CD8-positive, alpha-beta T cell (primary cell): ENCODE measurements at regions of chr6 and their contacts with region 1.

Region 1: GRCh38 chr6:2876210-2877056 is 26.7 kb downstream of the SERPINB9 start:
- DNase-seq: peak in 3 of 9 experiments; percentile 38 to 67 (median 57)
- ATAC-seq: peak; percentile 9
- H3K4me3 ChIP-seq: peak overlapping the region; percentile 33 to 65
- H3K4me3 Mint-ChIP-seq: peak overlapping the region; percentile 87
- H3K27ac ChIP-seq: peak overlapping the region; percentile 24 to 77
- H3K27ac Mint-ChIP-seq: peak overlapping the region; percentile 93
- H3K4me1 ChIP-seq: peaks cover 68% of the 10 kb centered on the region
- H3K4me1 Mint-ChIP-seq: peaks cover 78% of the 10 kb centered on the region
- H3K27me3 ChIP-seq: no peaks in the 10 kb centered on the region
- H3K27me3 Mint-ChIP-seq: no peaks in the 10 kb centered on the region
- CTCF ChIP-seq: no peak

Region 2: DNA sequence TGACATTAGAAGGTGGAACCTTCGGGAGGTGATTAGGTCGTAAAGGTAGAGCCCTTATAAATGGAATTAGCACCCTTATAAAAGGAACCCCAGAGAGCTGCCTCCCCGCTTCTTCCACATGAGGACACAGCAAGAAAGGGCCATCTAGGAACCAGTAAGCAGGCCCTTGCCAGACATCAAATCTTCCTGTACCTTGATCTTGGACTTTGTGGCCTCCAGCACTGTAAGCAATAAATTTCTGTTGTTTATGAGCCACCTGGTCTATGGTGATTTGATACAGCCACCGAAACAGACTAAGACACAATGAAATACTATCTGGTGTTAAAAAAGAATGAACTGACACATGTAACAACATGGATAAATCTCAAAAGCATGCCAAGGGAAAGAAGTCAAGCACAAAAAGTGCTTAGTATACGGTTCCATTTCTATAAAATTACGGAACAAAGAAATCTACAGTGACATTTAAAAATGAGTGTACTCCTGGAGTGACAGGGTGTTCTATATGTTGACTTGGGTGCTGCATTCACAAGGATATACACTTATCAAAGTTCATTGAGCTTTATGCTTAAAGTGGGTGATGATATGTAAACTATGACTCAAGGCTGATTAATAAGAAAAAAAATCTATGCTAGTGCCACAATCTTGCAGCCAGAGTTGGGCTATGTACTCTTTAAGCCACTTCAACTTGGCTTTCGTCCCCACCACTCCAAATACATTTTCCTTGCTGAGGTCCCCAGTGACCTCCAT is 53.2 kb before region 1 on chr6:
- CTCF ChIA-PET with region 1: no interaction called
- POLR2A ChIA-PET with region 1: no interaction called
- intact Hi-C with region 1: no loop called
- DNase-seq: no peak
- ATAC-seq: no peak
- H3K4me3 ChIP-seq: no peak overlapping the region
- H3K4me3 Mint-ChIP-seq: no peak overlapping the region
- H3K27ac ChIP-seq: no peak overlapping the region
- H3K27ac Mint-ChIP-seq: no peak overlapping the region
- H3K4me1 ChIP-seq: no peaks in the 10 kb centered on the region
- H3K4me1 Mint-ChIP-seq: peaks cover 12% of the 10 kb centered on the region
- H3K27me3 ChIP-seq: no peaks in the 10 kb centered on the region
- H3K27me3 Mint-ChIP-seq: no peaks in the 10 kb centered on the region
- CTCF ChIP-seq: no peak

Region 3: GRCh38 chr6:2862712-2863181 is 13.7 kb before region 1 on chr6:
- CTCF ChIA-PET with region 1: interaction called, 7 read pairs
- POLR2A ChIA-PET with region 1: interaction called, 19 read pairs
- intact Hi-C with region 1: loop called (anchors 2 kb)
- DNase-seq: peak in 3 of 9 experiments; percentile 28 to 35 (median 32)
- ATAC-seq: no peak
- H3K4me3 ChIP-seq: no peak overlapping the region
- H3K4me3 Mint-ChIP-seq: no peak overlapping the region
- H3K27ac ChIP-seq: peak overlapping the region in 1 of 2 experiments; percentile 80
- H3K27ac Mint-ChIP-seq: peak overlapping the region; percentile 93
- H3K4me1 ChIP-seq: peaks cover 50% of the 10 kb centered on the region
- H3K4me1 Mint-ChIP-seq: peaks cover 64% of the 10 kb centered on the region
- H3K27me3 ChIP-seq: no peaks in the 10 kb centered on the region
- H3K27me3 Mint-ChIP-seq: no peaks in the 10 kb centered on the region
- CTCF ChIP-seq: no peak

Region 4: DNA sequence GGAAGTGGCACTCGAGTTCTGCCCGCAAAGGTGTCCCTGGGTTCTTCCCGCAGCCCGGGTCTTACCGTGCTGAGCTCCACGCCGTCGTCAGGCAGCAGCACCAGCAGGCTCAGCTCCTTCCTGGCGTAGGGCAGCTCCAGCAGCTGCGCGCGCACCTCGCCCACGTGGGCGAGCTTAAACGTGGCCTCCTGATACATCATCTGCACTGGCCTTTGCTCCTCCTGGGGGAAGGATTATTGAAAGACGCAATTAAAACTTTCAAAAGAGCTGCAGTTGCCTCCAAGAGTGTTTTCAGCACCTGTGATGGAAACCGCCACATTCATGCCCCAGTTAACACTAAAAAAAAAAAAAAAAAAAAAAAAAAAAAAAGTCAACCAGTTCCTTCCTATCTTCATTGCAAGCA is 15.3 kb after region 1 on chr6:
- CTCF ChIA-PET with region 1: interaction called, 6 read pairs
- POLR2A ChIA-PET with region 1: interaction called, 11 read pairs
- intact Hi-C with region 1: loop called in 1 of 2 experiments (anchors 2 kb)
- DNase-seq: peak; percentile 35 to 89 (median 68)
- ATAC-seq: peak; percentile 94
- H3K4me3 ChIP-seq: peak overlapping the region in 1 of 2 experiments; percentile 9
- H3K4me3 Mint-ChIP-seq: peak overlapping the region; percentile 69
- H3K27ac ChIP-seq: peak overlapping the region; percentile 17 to 51
- H3K27ac Mint-ChIP-seq: peak overlapping the region; percentile 94
- H3K4me1 ChIP-seq: peaks cover 29% of the 10 kb centered on the region
- H3K4me1 Mint-ChIP-seq: peaks cover 67% of the 10 kb centered on the region
- H3K27me3 ChIP-seq: no peaks in the 10 kb centered on the region
- H3K27me3 Mint-ChIP-seq: no peaks in the 10 kb centered on the region
- CTCF ChIP-seq: no peak

Region 5: GRCh38 chr6:2900821-2901644 is 24.6 kb after region 1 on chr6:
- CTCF ChIA-PET with region 1: interaction called, 9 read pairs
- POLR2A ChIA-PET with region 1: interaction called, 5 read pairs
- intact Hi-C with region 1: loop called in 1 of 2 experiments (anchors 2 kb)
- DNase-seq: peak in 1 of 9 experiments; percentile 46
- ATAC-seq: no peak
- H3K4me3 ChIP-seq: peak overlapping the region; percentile 73 to 90
- H3K4me3 Mint-ChIP-seq: peak overlapping the region; percentile 99
- H3K27ac ChIP-seq: peak overlapping the region; percentile 67 to 82
- H3K27ac Mint-ChIP-seq: peak overlapping the region; percentile 96
- H3K4me1 ChIP-seq: peaks cover 37% of the 10 kb centered on the region
- H3K4me1 Mint-ChIP-seq: peaks cover 60% of the 10 kb centered on the region
- H3K27me3 ChIP-seq: no peaks in the 10 kb centered on the region
- H3K27me3 Mint-ChIP-seq: no peaks in the 10 kb centered on the region
- CTCF ChIP-seq: no peak